Head of caudate nucleus (tissue), 42 donors: ENCODE measurements at regions of chr9 and their contacts with region 1.

Region 1: GRCh38 chr9:87725900-87726709 is at the start of gene CTSL:
- DNase-seq: peak; percentile 92 to 99 (median 96)

Region 2: DNA sequence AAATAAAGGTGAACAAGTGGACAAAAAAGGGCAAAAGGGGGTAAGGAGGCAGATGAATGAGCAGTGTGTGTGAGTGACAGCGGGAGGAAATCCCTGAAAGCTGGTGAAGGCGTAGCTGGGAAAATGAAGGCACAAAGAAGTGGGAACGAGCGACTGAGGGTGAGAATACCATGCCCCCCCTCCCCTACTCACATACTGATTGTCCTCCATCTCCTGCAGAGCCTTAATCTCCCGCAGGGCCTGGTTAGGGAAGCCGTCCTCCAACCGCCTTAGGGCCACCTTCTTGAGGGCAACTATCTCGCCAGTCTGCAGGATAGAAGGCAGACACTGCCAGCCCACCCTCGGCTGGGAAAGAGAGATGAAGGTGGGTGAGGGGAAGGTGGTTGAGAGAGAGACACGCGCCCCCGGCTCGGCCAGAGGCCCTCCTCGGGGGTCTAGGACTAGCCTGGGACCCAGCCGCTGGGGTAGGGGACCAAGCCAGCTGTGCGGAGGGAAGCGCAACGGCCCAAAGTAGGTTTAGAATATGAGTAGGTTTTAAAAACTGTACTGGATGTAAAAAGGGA is 247.7 kb after region 1 on chr9:
- intact Hi-C with region 1: loop called (anchors 10 kb)
- DNase-seq: peak in 19 of 42 donors; percentile 5 to 54 (median 20)